MCF 10A (cell line): ENCODE measurements at regions of chr10 and their contacts with region 1.

Region 1: DNA sequence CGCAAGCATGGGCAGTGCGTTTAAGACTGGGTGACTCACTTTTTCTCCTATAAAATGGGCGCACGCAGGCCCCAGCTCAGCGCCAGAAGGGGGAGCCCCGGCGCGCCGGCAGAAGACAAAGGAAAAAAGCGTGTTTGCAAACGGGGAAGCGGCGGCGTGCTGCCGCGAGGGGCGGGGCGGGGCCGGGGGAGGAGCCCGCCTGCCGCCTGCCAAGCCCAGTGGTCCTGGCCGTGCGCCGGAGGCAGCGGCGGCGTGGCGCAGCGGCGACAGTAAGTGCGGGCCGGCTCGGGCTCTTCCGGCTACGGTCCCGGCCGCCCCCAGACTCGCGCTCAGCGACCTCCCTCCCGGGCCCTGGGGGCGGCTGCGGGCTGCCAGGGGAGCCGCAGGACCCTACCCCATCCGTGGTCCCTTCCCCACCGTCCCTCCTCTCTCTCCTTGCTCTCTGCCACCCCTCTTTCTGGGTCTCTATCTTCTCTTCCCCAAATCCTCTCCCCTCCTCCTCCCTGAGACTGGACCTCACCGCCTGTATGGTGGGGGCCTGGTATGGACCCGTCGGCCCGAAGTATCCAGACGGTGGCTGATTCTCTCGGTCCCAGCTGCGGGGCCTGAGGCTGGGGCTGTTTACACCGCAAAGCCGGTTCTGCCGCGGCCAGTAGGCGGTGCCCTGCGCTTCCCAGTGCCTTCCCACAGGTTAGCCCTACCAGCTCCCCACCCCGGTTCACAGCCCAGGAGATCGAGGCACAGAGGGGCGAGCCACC is at the start of gene SLC29A3:
- DNase-seq: peak; percentile 77
- H3K4me3 Mint-ChIP-seq: peak within 1 kb of the TSS; percentile 98
- H3K27ac Mint-ChIP-seq: no peak within 1 kb of the TSS
- H3K4me1 Mint-ChIP-seq: no peaks in the 10 kb centered on the region
- H3K27me3 Mint-ChIP-seq: no peaks in the 10 kb centered on the region
- CTCF ChIP-seq: peak; percentile 69
- total RNA-seq, gene SLC29A3: 3.6 and 4.0 TPM in 2 replicates

Region 2: DNA sequence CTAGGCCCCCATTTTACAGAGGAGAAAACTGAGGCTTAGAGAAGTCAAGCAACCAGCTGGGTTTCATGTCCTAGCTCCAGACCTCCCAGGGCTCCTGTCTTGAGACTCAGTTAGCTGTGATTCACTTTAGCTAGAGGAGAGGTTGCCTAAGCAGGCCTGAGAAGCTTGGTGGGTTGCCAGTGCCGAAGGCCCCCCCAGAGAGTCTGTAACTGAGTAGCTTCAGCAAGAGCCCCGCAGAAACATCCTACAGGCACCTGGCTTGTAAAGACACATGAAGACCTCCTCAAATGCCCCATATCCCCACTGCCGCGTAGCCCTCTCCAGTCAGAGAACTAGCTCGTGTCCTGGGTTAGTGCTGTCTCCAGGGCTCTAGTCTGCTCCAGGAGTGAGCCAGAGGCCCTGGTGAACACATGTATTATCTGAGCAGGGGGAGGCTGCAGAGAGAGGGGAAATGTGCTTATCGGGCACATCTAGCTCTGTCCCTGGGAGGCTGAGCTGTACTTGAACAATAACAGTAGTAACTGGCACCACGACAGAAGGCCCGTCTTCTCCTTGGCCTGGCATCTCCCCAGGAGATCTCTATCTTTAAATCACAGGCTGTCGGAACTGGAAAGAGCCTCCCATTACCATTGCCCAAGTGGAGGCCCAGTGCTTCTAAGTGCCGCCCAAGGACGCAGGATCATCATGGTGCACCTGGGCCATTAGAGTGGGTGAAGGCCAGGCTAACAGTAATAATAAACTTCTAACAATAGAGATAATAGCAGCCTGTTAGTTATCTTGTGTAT is 77.9 kb before region 1 on chr10:
- CTCF ChIA-PET with region 1: no interaction called
- POLR2A ChIA-PET with region 1: no interaction called
- intact Hi-C with region 1: no loop called
- DNase-seq: no peak
- H3K4me3 Mint-ChIP-seq: peak overlapping the region; percentile 19
- H3K27ac Mint-ChIP-seq: peak overlapping the region; percentile 63
- H3K4me1 Mint-ChIP-seq: peaks cover 47% of the 10 kb centered on the region
- H3K27me3 Mint-ChIP-seq: no peaks in the 10 kb centered on the region
- CTCF ChIP-seq: no peak

Region 3: GRCh38 chr10:71331736-71332135 is 12.5 kb after region 1 on chr10:
- CTCF ChIA-PET with region 1: interaction called, 19 read pairs
- POLR2A ChIA-PET with region 1: interaction called, 3 read pairs
- intact Hi-C with region 1: no loop called
- DNase-seq: no peak
- H3K4me3 Mint-ChIP-seq: no peak overlapping the region
- H3K27ac Mint-ChIP-seq: no peak overlapping the region
- H3K4me1 Mint-ChIP-seq: peaks cover 22% of the 10 kb centered on the region
- H3K27me3 Mint-ChIP-seq: no peaks in the 10 kb centered on the region
- CTCF ChIP-seq: no peak

Region 4: GRCh38 chr10:71366690-71367089 is 47.5 kb after region 1 on chr10:
- CTCF ChIA-PET with region 1: interaction called, 19 read pairs
- POLR2A ChIA-PET with region 1: interaction called, 13 read pairs
- intact Hi-C with region 1: loop called (anchors 1 kb)
- DNase-seq: no peak
- H3K4me3 Mint-ChIP-seq: no peak overlapping the region
- H3K27ac Mint-ChIP-seq: no peak overlapping the region
- H3K4me1 Mint-ChIP-seq: peaks cover 21% of the 10 kb centered on the region
- H3K27me3 Mint-ChIP-seq: no peaks in the 10 kb centered on the region
- CTCF ChIP-seq: no peak

Region 5: GRCh38 chr10:71383972-71384687 is 64.9 kb after region 1 on chr10:
- CTCF ChIA-PET with region 1: interaction called, 13 read pairs
- POLR2A ChIA-PET with region 1: interaction called, 3 read pairs
- intact Hi-C with region 1: no loop called
- DNase-seq: peak; percentile 58
- H3K4me3 Mint-ChIP-seq: no peak overlapping the region
- H3K27ac Mint-ChIP-seq: no peak overlapping the region
- H3K4me1 Mint-ChIP-seq: no peaks in the 10 kb centered on the region
- H3K27me3 Mint-ChIP-seq: peaks cover 15% of the 10 kb centered on the region
- CTCF ChIP-seq: peak; percentile 92

Region 6: GRCh38 chr10:71608819-71609768 is 289.9 kb after region 1 on chr10:
- CTCF ChIA-PET with region 1: interaction called, 15 read pairs
- POLR2A ChIA-PET with region 1: no interaction called
- intact Hi-C with region 1: loop called (anchors 2 kb)
- DNase-seq: peak; percentile 61
- H3K4me3 Mint-ChIP-seq: no peak overlapping the region
- H3K27ac Mint-ChIP-seq: no peak overlapping the region
- H3K4me1 Mint-ChIP-seq: peaks cover 6% of the 10 kb centered on the region
- H3K27me3 Mint-ChIP-seq: peaks cover 57% of the 10 kb centered on the region
- CTCF ChIP-seq: peak; percentile 78

Region 7: DNA sequence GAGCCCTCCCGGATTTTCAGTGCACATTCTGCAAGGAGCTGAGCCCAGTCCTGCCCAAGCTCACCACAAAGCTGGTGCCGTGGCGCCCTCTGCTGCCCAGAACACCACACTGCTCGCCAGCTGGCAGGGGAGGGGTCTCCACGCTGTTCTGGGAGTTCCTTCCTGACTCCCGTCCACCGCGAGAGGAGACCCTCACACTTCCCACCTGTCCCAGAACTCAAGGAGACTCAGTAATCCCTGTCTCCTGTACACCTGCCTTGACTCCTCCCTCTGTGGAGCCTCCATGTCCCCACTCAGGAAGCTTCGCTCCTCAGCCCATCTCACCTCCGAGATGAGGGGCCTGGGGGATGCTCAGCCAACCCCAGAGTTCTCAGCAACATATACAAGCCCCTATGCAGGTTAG is 389.1 kb after region 1 on chr10:
- CTCF ChIA-PET with region 1: interaction called, 25 read pairs
- POLR2A ChIA-PET with region 1: interaction called, 5 read pairs
- intact Hi-C with region 1: no loop called
- DNase-seq: peak; percentile 47
- H3K4me3 Mint-ChIP-seq: no peak overlapping the region
- H3K27ac Mint-ChIP-seq: no peak overlapping the region
- H3K4me1 Mint-ChIP-seq: peaks cover 11% of the 10 kb centered on the region
- H3K27me3 Mint-ChIP-seq: no peaks in the 10 kb centered on the region
- CTCF ChIP-seq: peak; percentile 84

Region 8: DNA sequence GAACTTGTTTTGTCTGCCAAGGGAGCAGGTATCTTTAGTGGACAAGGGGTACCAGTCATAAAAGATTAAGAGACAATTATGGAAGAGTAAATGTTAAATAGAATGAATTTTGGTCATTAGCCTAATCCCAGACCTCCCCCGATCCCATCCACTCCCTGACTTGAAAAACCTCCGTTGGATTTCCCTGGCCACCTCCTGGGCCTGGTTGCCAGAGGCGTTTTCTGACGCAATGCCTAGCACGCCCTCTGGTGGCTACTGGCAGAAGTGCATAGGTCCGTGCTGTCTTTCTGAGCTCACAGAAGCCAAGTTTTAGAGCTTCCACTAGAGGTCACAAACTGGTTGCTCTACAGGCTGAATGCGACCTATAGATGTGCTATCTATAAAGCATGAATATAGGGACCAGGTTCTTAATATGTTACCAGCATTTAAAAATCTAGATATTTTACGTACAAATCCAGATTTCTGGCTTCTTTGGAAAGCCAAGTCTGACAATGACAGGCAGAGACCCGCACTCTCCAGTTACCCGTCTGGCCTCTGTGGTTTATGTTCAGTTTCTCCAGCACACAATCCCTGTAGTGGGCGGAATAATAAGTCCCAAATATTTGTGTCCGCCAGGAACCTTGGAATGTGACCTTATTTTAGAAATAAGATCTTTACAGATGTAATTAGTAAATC is 729.4 kb after region 1 on chr10:
- CTCF ChIA-PET with region 1: no interaction called
- POLR2A ChIA-PET with region 1: no interaction called
- intact Hi-C with region 1: loop called (anchors 10 kb)
- DNase-seq: peak; percentile 93
- H3K4me3 Mint-ChIP-seq: no peak overlapping the region
- H3K27ac Mint-ChIP-seq: peak overlapping the region; percentile 63
- H3K4me1 Mint-ChIP-seq: peaks cover 15% of the 10 kb centered on the region
- H3K27me3 Mint-ChIP-seq: no peaks in the 10 kb centered on the region
- CTCF ChIP-seq: peak; percentile 98